Cardiac septum (tissue), 1 donor: ENCODE measurements at regions of chr13 and their contacts with region 1.

Region 1: DNA sequence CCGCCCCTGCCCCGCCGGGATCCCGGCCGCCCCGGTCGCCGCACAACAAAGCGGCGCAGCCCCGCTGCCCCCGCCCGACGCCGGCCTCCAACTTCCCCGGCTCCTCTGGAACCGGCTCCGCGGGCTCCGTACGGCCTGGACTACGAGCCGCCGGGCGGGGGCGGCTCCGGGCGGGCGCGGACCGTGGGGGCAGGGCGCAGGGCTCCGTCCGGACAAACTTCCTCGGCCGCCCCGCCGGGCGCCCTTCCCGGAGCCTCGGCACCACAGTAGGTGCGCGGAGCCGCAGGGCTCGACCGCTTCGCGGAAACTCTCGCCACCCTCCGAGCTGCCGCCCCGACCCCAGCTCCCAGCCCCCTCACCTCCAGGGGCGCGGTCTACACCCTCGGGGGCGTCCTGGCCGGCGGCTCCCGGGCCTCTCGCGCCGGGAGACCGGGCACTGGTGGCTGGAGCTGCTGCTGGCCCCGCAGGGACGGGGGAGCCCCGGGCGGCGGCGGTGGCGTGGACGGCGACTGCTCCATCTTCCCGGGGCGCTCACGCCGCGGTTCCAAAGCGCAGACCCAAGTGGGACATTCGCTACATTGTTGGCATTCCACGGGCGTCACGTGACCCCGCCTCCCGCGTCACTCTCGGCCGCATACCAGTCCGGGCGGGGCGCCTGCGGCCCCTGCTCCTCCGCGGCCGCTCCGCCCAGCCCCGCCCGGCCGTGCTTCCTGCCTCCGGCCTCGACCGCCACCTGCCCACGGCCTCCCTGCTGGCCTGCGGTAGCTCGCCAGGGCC is at the start of gene LATS2:
- DNase-seq: peak; percentile 99
- total RNA-seq, gene LATS2: 27.8 TPM

Region 2: GRCh38 chr13:21034603-21035191 is 26.5 kb before region 1 on chr13:
- intact Hi-C with region 1: loop called (anchors 2 kb)
- DNase-seq: no peak